Body of pancreas (tissue), 4 donors: ENCODE measurements at regions of chr12 and their contacts with region 1.

Region 1: GRCh38 chr12:29519585-29520182 is 22.2 kb upstream of the OVCH1 start:
- DNase-seq: peak in 3 of 4 donors; percentile 22 to 31 (median 27)
- ATAC-seq: no peak
- H3K4me3 ChIP-seq: no peak overlapping the region
- H3K27ac ChIP-seq: no peak overlapping the region
- H3K4me1 ChIP-seq: no peaks in the 10 kb centered on the region
- H3K27me3 ChIP-seq: no peaks in the 10 kb centered on the region
- CTCF ChIP-seq: peak; percentile 24 to 68 (median 54)
- POLR2A ChIP-seq: no peak

Region 2: DNA sequence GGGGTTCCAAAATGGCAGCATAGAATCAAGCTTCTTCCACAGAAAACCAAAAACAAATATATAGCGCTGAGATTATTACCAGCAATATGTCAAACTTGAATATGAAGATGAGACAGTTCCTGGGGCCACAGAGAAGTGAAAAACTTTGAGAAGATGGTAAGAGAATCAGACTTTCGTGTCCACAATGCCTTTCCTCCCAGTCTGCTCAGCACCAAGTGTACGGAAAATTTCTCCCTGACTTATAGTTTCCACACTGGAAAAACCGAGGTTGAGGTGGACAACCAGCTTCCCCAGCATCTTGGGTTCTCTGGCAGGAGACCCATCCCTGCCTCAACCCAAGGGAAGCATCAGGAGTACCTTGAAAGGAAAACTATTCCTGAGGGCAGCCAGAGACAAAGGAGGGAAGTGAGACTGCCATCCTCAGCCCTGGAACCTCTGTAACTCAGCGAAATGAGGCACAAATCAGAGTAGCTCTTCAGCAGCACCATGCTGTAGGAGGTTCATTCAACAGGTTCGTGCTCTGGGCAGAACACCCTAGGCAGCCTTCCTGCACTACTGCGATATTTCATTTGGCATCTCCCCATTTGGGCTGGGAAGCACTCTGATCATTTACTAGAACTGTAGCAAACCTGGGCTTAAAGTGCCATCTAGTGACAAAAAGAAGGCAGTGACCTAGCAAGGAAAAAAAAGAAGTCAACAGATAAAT is 1287.5 kb after region 1 on chr12:
- intact Hi-C with region 1: loop called (anchors 10 kb)
- DNase-seq: peak; percentile 53 to 67 (median 60)
- ATAC-seq: peak; percentile 81
- H3K4me3 ChIP-seq: no peak overlapping the region
- H3K27ac ChIP-seq: no peak overlapping the region
- H3K4me1 ChIP-seq: peaks cover 4% of the 10 kb centered on the region
- H3K27me3 ChIP-seq: no peaks in the 10 kb centered on the region
- CTCF ChIP-seq: peak; percentile 56 to 98 (median 92)
- POLR2A ChIP-seq: no peak